ENCODE measurements at regions of chr3 and their contacts with region 1.

Region 1: GRCh38 chr3:194141415-194142155 is 5.6 kb downstream of the HES1 start:
- DNase-seq: peak; percentile 78
- ATAC-seq: peak; percentile 66
- H3K4me3 ChIP-seq: peak overlapping the region; percentile 51 to 74 (median 62); a peak in 5 of 6 replicates
- H3K27ac ChIP-seq: peak overlapping the region; percentile 92
- H3K4me1 ChIP-seq: peaks cover 45% of the 10 kb centered on the region
- H3K27me3 ChIP-seq: peaks cover 0 to 3% of the 10 kb centered on the region in 2 experiments; a peak in 2 of 5 replicates
- CTCF ChIP-seq: peak; percentile 30; the same call in 1 of the 2 replicates
- EP300 ChIP-seq: peak in 1 of 2 experiments; percentile 67; a peak in 2 of 4 replicates
- POLR2A ChIP-seq: peak in 1 of 2 experiments; percentile 66; a peak in 1 of 4 replicates
- RAD21 ChIP-seq: peak; percentile 65

Region 2: GRCh38 chr3:194035406-194036138 is 106.0 kb before region 1 on chr3:
- CTCF ChIA-PET with region 1: no interaction called
- POLR2A ChIA-PET with region 1: no interaction called
- in situ Hi-C with region 1: no loop called
- intact Hi-C with region 1: no loop called
- DNase-seq: no peak
- ATAC-seq: peak; percentile 18; the same call in 1 of the 3 replicates
- H3K4me3 ChIP-seq: no peak overlapping the region
- H3K27ac ChIP-seq: no peak overlapping the region
- H3K4me1 ChIP-seq: peaks cover 52% of the 10 kb centered on the region
- H3K27me3 ChIP-seq: peaks cover 3 to 30% of the 10 kb centered on the region in 2 experiments; a peak in 4 of 5 replicates
- CTCF ChIP-seq: no peak
- EP300 ChIP-seq: no peak
- POLR2A ChIP-seq: no peak
- RAD21 ChIP-seq: no peak

Region 3: DNA sequence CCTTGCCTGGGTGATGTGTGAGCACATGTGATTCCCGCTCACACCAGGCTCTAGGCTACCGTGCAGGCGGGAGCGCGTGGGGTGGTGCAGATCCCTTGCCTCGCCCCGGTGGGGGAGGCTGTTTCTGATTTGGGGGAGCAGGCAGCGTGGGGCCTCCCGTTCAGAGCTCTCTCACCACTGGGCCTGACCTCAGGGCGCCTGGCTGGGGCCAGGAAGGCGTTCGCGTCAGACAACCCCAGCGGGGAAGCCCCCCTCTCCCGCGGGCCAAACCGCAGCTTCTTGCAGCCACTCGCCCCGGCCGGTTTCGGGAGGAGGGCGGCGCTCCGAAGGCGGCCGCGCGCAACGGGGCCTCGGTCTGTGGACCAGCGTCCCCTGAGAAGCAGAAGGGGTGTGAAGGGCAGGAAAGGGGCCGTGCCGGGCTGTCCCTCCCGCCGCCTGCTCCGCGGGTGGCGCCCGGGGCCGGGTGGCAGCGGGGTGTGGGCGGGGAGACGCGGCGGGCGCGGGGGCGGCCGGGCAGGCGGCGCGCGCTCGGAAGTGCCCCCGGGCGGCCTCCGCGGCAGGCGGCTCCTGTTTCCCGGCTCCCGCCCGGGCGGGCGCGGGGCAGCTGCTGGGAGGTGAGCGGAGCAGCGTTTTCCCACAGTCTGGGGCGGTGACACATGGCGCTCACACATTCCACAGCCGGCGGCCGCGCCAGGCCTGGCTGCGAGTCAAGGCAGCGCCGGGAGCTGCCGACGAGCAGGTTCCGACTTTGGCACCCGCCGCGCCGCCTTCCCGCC is 70.8 kb before region 1 on chr3:
- CTCF ChIA-PET with region 1: no interaction called
- POLR2A ChIA-PET with region 1: interaction called, 128 read pairs
- in situ Hi-C with region 1: loop called (anchors 10 kb)
- intact Hi-C with region 1: no loop called
- DNase-seq: peak; percentile 47
- ATAC-seq: peak; percentile 67
- H3K4me3 ChIP-seq: peak overlapping the region; percentile 41 to 68 (median 47); a peak in 5 of 6 replicates
- H3K27ac ChIP-seq: peak overlapping the region; percentile 68
- H3K4me1 ChIP-seq: peaks cover 53% of the 10 kb centered on the region
- H3K27me3 ChIP-seq: no peaks in the 10 kb centered on the region; a peak in 1 of 5 replicates
- CTCF ChIP-seq: no peak
- EP300 ChIP-seq: no peak; a peak in 2 of 4 replicates
- POLR2A ChIP-seq: peak in 1 of 2 experiments; percentile 33; a peak in 1 of 4 replicates
- RAD21 ChIP-seq: no peak; the same call in 1 of the 2 replicates

Region 4: DNA sequence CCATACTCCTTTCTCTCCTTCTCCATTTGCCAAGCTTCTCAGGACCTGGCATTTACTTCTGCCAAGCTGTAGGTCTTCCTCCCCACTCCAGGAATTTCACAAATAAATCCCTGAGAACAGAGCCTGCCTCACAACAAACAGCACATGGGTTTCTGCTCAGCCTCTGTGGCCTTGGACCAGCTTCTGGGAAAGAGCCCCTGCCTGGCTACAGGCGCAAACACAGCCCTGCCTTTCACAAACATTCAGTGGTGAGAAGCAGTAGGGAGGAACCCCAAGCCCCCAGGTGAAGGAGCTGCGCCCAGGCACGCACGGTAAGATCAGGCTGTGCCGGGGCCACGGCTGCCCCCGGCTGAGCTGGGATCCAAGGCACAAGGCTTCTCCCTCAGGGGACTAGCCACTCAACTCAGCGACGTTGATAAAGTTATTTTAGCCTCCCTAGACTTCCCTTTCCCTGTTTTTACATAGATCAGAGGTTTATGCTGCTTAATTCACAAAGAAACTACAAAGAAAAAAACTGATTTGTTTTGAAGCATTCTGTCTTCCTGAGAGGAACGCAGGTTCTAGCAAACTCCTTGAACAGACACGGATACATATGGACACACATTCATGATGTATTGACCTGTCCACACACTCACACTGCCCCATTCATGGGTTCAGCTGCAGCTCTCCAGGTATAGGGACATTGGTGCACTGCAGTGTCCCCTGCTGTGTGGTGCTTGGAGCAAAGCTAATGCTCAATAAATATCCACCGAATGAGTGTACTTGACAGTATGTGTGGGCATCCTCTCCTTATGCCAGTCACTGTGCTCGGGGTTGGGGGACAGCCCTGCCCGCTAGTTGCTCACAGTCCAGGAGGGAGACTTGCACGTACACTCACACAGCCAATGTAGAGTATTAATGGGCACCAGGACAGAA is 19.8 kb after region 1 on chr3:
- CTCF ChIA-PET with region 1: no interaction called
- POLR2A ChIA-PET with region 1: interaction called, 11 read pairs
- in situ Hi-C with region 1: no loop called
- intact Hi-C with region 1: no loop called
- DNase-seq: peak; percentile 62
- ATAC-seq: peak; percentile 86
- H3K4me3 ChIP-seq: peak overlapping the region in 2 of 3 experiments; percentile 34 to 53; a peak in 2 of 6 replicates
- H3K27ac ChIP-seq: no peak overlapping the region
- H3K4me1 ChIP-seq: peaks cover 61% of the 10 kb centered on the region
- H3K27me3 ChIP-seq: peaks cover 0 to 12% of the 10 kb centered on the region in 2 experiments; a peak in 3 of 5 replicates
- CTCF ChIP-seq: peak; percentile 37; the same call in 1 of the 2 replicates
- EP300 ChIP-seq: peak in 1 of 2 experiments; percentile 22; a peak in 1 of 4 replicates
- POLR2A ChIP-seq: no peak
- RAD21 ChIP-seq: no peak